OCI-LY7 (cell line): ENCODE measurements at regions of chr16 and their contacts with region 1.

Region 1: GRCh38 chr16:28823872-28824716 is 1.3 kb downstream of the ATXN2L start:
- DNase-seq: peak; percentile 96
- H3K4me3 ChIP-seq: peak overlapping the region; percentile 97
- H3K27ac ChIP-seq: peak overlapping the region; percentile 95
- H3K4me1 ChIP-seq: peaks cover 24% of the 10 kb centered on the region
- CTCF ChIP-seq: no peak; the same call in 1 of the 2 replicates

Region 2: GRCh38 chr16:28491970-28492474 is 332.1 kb before region 1 on chr16 and contains the start of gene CLN3:
- CTCF ChIA-PET with region 1: no interaction called
- POLR2A ChIA-PET with region 1: interaction called, 3 read pairs
- intact Hi-C with region 1: loop called (anchors 5 kb)
- DNase-seq: peak; percentile 97
- H3K4me3 ChIP-seq: peak within 1 kb of the TSS; percentile 88
- H3K27ac ChIP-seq: peak within 1 kb of the TSS; percentile 74
- H3K4me1 ChIP-seq: peaks cover 35% of the 10 kb centered on the region
- CTCF ChIP-seq: no peak
- total RNA-seq, gene CLN3: 29.7 and 45.5 TPM in 2 replicates

Region 3: DNA sequence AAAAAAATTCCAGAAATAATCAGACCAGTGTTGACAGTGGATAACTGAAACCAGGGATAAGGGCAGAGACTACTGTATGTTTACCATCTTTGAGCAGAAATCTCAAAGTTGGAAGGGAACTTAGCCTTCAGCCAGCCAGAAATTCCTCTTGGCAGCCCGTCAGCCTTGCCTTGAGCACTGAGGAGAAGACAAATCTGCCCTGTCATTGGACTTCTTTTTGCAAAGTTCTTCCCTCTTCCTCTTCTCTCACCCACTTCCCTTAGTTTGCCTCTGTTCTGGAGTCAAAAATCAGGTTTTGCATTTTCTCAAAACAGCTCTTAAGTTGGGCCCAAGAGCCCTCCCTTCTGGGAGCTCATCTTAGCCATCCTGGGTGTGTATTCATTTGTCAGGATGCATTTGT is 15.8 kb after region 1 on chr16:
- CTCF ChIA-PET with region 1: no interaction called
- POLR2A ChIA-PET with region 1: interaction called, 10 read pairs
- intact Hi-C with region 1: no loop called
- DNase-seq: no peak
- H3K4me3 ChIP-seq: no peak overlapping the region
- H3K27ac ChIP-seq: peak overlapping the region; percentile 10
- H3K4me1 ChIP-seq: peaks cover 5% of the 10 kb centered on the region
- CTCF ChIP-seq: no peak

Region 4: DNA sequence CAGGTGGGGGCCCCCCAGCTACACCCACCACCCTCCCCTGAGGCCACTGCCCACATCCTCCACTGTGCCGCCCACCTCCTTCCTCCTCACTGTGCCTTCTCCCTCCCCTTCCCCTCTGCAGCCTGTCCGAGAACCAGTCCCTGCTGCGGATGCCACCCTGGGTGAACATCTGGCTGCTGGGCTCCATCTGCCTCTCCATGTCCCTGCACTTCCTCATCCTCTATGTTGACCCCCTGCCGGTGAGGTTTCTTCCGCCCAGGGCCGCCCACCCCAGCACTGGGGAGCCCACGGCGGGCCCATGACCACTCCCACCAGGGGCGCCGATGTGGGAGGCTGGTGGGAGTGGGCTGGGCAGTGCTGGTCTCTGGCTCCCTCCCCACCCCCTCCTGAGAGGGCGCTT is 78.8 kb after region 1 on chr16:
- CTCF ChIA-PET with region 1: no interaction called
- POLR2A ChIA-PET with region 1: no interaction called
- intact Hi-C with region 1: no loop called
- DNase-seq: no peak
- H3K4me3 ChIP-seq: no peak overlapping the region
- H3K27ac ChIP-seq: no peak overlapping the region
- H3K4me1 ChIP-seq: no peaks in the 10 kb centered on the region
- CTCF ChIP-seq: no peak